ENCODE measurements at regions of chr3 and their contacts with region 1.

Region 1: DNA sequence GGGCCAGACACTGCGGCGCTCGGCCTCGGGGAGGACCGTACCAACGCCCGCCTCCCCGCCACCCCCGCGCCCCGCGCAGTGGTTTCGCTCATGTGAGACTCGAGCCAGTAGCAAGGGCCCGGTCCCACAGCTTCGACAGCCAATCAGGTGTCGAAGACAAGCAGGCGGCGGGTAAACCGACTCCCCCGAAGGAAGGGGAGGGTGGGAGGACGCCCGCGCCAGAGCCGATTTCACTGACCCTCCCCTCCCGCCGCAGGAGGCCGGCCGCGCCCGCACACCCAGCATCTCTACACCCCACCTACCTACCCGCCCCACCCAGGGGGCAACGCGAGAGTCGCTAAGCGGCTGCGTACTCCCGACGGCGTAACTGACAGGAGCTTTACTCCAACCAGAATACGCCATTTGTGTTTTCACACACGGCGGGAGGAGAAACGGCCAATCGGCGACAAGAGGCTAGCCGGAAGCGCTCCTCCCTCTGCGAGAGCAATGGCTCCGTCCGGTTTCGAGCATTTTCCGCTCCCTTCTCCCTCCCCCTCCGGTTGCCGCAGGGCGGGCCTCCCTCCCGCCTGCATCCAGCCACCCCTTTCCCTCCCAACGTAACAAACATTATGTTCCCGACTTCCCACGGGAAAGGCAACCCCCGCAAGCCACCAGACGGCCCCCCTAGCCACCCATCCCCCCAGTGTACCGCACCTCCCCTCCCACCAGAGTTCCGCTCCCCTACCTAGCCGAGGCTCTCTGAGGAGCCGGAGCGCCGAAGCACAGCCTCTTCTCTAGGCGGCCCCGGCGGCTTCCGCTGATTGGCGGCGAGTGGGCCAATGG is 504 bp upstream of the SETD5 start:
- DNase-seq: peak; percentile 98 to 100 (median 99)
- H3K4me3 ChIP-seq: peak overlapping the region; percentile 93
- H3K4me3 Mint-ChIP-seq: peak overlapping the region; percentile 91 to 99 (median 97)
- H3K27ac ChIP-seq: peak overlapping the region; percentile 90
- H3K27ac Mint-ChIP-seq: peak overlapping the region; percentile 93 to 99 (median 98)
- H3K4me1 ChIP-seq: peaks cover 69% of the 10 kb centered on the region
- H3K4me1 Mint-ChIP-seq: peaks cover 65 to 80% (median 77%) of the 10 kb centered on the region in 3 donors
- H3K27me3 ChIP-seq: no peaks in the 10 kb centered on the region
- H3K27me3 Mint-ChIP-seq: peaks cover 0 to 4% of the 10 kb centered on the region in 2 donors

Region 2: DNA sequence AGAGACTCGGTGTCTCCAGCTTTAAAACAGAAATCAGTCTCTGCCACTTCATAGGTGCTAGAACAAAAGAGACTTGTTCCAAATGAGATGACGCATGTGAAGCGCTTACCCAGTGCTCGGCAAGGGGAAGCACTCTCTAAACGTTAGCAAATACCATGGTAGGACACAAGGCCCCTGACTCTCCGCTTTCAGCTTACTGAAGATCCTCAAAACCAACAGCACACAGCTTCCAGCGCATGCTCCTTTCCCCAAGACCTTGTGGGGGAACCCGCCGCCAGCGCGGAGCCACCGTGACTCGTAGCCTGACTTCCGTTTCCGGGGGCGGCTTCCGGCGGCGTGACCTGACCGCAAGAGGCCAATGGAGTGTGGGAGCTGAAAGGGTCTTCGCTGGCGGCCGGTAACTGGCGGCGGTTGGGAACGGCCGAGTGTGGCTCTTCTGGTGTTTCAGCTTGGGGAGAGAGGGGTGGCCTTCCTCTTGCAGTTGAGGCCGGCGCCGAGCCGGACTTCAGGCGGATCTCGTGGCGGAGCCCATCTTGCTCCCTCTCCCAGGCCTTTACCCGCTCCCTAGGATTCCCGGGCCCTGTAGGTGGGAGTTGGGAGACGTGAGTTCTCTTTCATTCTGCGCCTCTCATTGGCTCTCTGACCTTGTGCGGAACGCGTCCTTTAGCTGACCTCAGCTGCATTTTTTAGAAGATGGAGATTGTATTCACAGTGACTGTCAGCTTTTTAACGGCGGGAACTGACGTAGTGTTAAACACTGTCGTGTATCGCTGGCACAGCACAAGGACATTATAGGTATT is 34.0 kb before region 1 on chr3 and contains the start of gene THUMPD3:
- CTCF ChIA-PET with region 1: interaction called, 24 read pairs
- POLR2A ChIA-PET with region 1: interaction called, 81 read pairs
- DNase-seq: peak; percentile 84 to 93 (median 87)
- H3K4me3 ChIP-seq: peak within 1 kb of the TSS; percentile 98
- H3K4me3 Mint-ChIP-seq: peak within 1 kb of the TSS; percentile 90 to 100 (median 98)
- H3K27ac ChIP-seq: peak within 1 kb of the TSS; percentile 99
- H3K27ac Mint-ChIP-seq: peak within 1 kb of the TSS; percentile 95 to 100 (median 99)
- H3K4me1 ChIP-seq: peaks cover 21% of the 10 kb centered on the region
- H3K4me1 Mint-ChIP-seq: peaks cover 16 to 40% (median 19%) of the 10 kb centered on the region in 3 donors
- H3K27me3 ChIP-seq: no peaks in the 10 kb centered on the region
- H3K27me3 Mint-ChIP-seq: no peaks in the 10 kb centered on the region
- total RNA-seq, gene THUMPD3: 58.4 to 58.5 TPM

Region 3: GRCh38 chr3:9379327-9379726 is 17.6 kb before region 1 on chr3:
- CTCF ChIA-PET with region 1: interaction called, 4 read pairs
- POLR2A ChIA-PET with region 1: interaction called, 13 read pairs
- DNase-seq: no peak
- H3K4me3 ChIP-seq: no peak overlapping the region
- H3K4me3 Mint-ChIP-seq: no peak overlapping the region
- H3K27ac ChIP-seq: no peak overlapping the region
- H3K27ac Mint-ChIP-seq: peak overlapping the region in 3 of 8 donors; percentile 2 to 73 (median 27)
- H3K4me1 ChIP-seq: peaks cover 5% of the 10 kb centered on the region
- H3K4me1 Mint-ChIP-seq: peaks cover 18 to 44% (median 38%) of the 10 kb centered on the region in 3 donors
- H3K27me3 ChIP-seq: no peaks in the 10 kb centered on the region
- H3K27me3 Mint-ChIP-seq: peaks cover 0 to 4% of the 10 kb centered on the region in 2 donors

Region 4: DNA sequence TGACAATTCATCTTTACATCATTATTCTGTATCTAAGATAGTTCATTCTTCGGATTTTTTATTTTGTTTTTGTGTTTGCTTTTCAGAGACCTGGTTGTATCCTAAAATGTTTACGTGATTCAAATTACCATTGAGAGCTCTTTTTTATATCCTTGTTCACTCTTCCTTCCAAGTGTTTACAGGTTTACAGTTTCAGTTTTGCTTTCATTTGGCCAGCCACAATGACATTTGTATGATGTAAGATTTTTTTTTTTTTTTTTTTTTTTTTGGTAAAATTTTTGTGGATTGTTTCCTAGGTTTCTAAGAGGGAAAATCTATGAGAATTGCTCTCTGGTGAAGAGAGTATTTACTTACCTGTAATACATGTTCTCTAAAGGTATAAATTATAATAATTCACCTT is 55.5 kb after region 1 on chr3:
- CTCF ChIA-PET with region 1: no interaction called
- POLR2A ChIA-PET with region 1: interaction called, 13 read pairs
- DNase-seq: peak in 1 of 5 donors; percentile 17
- H3K4me3 ChIP-seq: no peak overlapping the region
- H3K4me3 Mint-ChIP-seq: peak overlapping the region in 4 of 7 donors; percentile 32 to 54 (median 46)
- H3K27ac ChIP-seq: no peak overlapping the region
- H3K27ac Mint-ChIP-seq: peak overlapping the region; percentile 70 to 93 (median 88)
- H3K4me1 ChIP-seq: no peaks in the 10 kb centered on the region
- H3K4me1 Mint-ChIP-seq: peaks cover 21 to 44% (median 29%) of the 10 kb centered on the region in 3 donors
- H3K27me3 ChIP-seq: no peaks in the 10 kb centered on the region
- H3K27me3 Mint-ChIP-seq: no peaks in the 10 kb centered on the region

Region 5: GRCh38 chr3:9491506-9491905 is 94.6 kb after region 1 on chr3:
- CTCF ChIA-PET with region 1: no interaction called
- POLR2A ChIA-PET with region 1: no interaction called
- DNase-seq: no peak
- H3K4me3 ChIP-seq: no peak overlapping the region
- H3K4me3 Mint-ChIP-seq: no peak overlapping the region
- H3K27ac ChIP-seq: no peak overlapping the region
- H3K27ac Mint-ChIP-seq: peak overlapping the region in 1 of 8 donors; percentile 34
- H3K4me1 ChIP-seq: no peaks in the 10 kb centered on the region
- H3K4me1 Mint-ChIP-seq: no peaks in the 10 kb centered on the region
- H3K27me3 ChIP-seq: no peaks in the 10 kb centered on the region
- H3K27me3 Mint-ChIP-seq: no peaks in the 10 kb centered on the region